Activated CD4-positive, alpha-beta memory T cell treated with anti-CD3 and anti-CD28 coated beads, Interleukin-2, amount 10 ng/mL, durations not matched to agents 7 days and 5 days (primary cell): ENCODE measurements at regions of chr13 and their contacts with region 1.

Region 1: DNA sequence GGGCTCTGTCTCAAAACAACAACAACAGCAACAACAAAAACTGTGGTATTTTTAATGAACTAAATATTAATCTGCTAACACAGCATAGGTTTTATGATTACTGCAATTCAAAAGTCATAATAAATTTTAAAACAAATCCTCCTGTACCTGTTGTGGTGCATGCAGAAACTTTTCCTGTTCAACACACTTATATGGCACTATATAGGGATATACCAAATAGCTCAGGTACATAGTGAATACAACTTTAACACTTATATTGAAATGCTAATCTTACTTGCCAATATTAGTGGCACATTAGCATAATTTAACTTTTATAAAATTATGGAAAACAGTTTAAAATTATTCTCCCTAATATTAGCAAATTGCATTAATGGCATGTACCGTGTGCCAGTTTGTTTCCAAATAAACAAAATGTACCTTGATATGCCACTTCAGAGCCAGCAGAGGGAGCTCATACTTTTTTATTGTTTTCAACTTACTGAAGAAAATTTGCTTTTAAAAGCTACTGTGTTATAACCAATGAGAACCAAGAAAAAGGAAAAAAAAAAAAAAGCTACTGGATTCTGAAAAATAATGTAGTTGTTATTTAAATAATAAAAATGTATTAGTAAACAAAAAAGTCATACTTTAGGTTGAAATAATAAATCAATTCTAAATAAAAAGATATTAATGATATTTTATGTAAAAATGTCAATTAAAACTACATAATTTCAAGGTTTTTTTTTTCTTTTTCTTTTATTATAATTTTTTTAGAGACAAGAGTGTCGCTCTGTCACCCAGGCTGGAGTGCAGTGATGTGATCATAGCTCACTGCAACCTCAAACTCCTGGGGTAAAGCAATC is 18.0 kb upstream of the RBM26 start:
- DNase-seq: no peak
- H3K4me3 Mint-ChIP-seq: no peak overlapping the region
- H3K27ac Mint-ChIP-seq: no peak overlapping the region
- H3K4me1 Mint-ChIP-seq: peaks cover 8% of the 10 kb centered on the region
- H3K27me3 Mint-ChIP-seq: no peaks in the 10 kb centered on the region

Region 2: GRCh38 chr13:79405829-79406596 is 18.0 kb before region 1 on chr13 and contains the start of gene RBM26:
- CTCF ChIA-PET with region 1: interaction called, 19 read pairs
- POLR2A ChIA-PET with region 1: interaction called, 11 read pairs
- DNase-seq: peak; percentile 94
- H3K4me3 Mint-ChIP-seq: peak within 1 kb of the TSS; percentile 89
- H3K27ac Mint-ChIP-seq: peak within 1 kb of the TSS; percentile 93
- H3K4me1 Mint-ChIP-seq: peaks cover 13% of the 10 kb centered on the region
- H3K27me3 Mint-ChIP-seq: no peaks in the 10 kb centered on the region
- total RNA-seq, gene RBM26: 51.1 to 52.0 TPM

Region 3: DNA sequence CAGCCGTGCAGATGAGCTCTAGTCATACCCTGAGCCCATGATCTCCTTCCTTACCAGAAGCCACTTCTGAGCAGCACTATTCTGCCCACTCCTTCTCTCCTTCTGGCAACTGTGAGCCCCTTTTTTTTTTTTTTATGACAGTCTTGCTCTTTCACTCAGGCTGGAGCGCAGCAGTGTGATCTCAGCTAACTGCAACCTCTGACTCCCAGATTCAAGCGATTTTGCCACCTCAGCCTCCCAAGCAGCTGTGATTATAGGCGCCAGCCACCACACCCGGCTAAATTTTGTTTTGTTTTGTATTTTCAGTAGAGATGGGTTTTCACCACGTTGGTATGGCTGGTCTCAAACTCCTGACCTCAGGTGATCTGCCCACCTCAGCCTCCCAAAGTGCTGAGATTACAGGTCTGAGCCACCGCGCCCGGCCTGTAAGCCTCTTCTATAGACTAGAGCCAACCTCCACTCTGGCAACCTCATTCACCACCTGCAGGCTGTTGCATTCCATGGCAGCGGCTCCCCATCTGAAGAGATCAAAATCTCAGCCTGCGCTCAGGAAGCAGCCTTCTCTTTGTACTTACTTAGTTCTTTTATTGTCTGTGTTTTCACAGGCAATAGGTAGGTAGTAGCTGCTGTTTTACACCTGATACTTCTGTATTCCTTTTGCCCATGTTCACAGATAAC is 22.1 kb after region 1 on chr13:
- CTCF ChIA-PET with region 1: interaction called, 11 read pairs
- POLR2A ChIA-PET with region 1: interaction called, 4 read pairs
- DNase-seq: no peak
- H3K4me3 Mint-ChIP-seq: no peak overlapping the region
- H3K27ac Mint-ChIP-seq: no peak overlapping the region
- H3K4me1 Mint-ChIP-seq: peaks cover 50% of the 10 kb centered on the region
- H3K27me3 Mint-ChIP-seq: no peaks in the 10 kb centered on the region

Region 4: GRCh38 chr13:79457948-79458347 is 33.9 kb after region 1 on chr13:
- CTCF ChIA-PET with region 1: interaction called, 13 read pairs
- POLR2A ChIA-PET with region 1: interaction called, 4 read pairs
- DNase-seq: peak; percentile 31
- H3K4me3 Mint-ChIP-seq: no peak overlapping the region
- H3K27ac Mint-ChIP-seq: no peak overlapping the region
- H3K4me1 Mint-ChIP-seq: peaks cover 47% of the 10 kb centered on the region
- H3K27me3 Mint-ChIP-seq: no peaks in the 10 kb centered on the region

Region 5: GRCh38 chr13:79516595-79516994 is 92.6 kb after region 1 on chr13:
- CTCF ChIA-PET with region 1: interaction called, 14 read pairs
- POLR2A ChIA-PET with region 1: no interaction called
- DNase-seq: no peak
- H3K4me3 Mint-ChIP-seq: no peak overlapping the region
- H3K27ac Mint-ChIP-seq: no peak overlapping the region
- H3K4me1 Mint-ChIP-seq: peaks cover 41% of the 10 kb centered on the region
- H3K27me3 Mint-ChIP-seq: no peaks in the 10 kb centered on the region

Region 6: GRCh38 chr13:79528759-79529191 is 104.8 kb after region 1 on chr13:
- CTCF ChIA-PET with region 1: interaction called, 27 read pairs
- POLR2A ChIA-PET with region 1: no interaction called
- DNase-seq: no peak
- H3K4me3 Mint-ChIP-seq: no peak overlapping the region
- H3K27ac Mint-ChIP-seq: no peak overlapping the region
- H3K4me1 Mint-ChIP-seq: peaks cover 24% of the 10 kb centered on the region
- H3K27me3 Mint-ChIP-seq: no peaks in the 10 kb centered on the region

Region 7: DNA sequence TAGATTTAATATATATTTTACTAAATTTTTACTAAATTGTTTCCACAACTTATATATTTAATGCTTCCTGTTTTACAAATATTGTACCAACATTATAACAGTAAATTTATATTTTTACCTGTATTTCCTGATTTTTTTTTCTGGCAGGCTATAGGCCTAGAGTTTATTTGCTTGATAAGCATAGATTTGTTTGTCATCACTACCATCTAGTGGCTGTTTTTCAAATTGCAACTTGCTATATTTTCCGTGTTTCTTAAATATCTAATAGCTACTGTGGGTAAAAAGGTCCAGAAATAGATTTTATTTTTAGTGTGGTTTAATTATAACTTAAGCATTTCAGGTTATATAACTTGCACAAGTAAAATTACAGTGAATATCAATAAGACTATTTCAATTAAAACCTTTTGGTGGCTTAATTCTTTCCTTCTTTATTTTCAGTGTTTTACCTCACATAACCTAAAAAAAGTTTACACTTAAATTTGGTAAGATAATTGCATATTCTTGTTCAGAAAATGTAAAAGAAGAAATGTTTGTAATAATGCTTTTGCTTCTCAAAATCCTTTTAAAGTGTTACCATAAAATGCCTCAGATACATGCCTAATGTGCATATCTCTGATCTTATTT is 117.5 kb after region 1 on chr13:
- CTCF ChIA-PET with region 1: interaction called, 181 read pairs
- POLR2A ChIA-PET with region 1: interaction called, 17 read pairs
- DNase-seq: no peak
- H3K4me3 Mint-ChIP-seq: no peak overlapping the region
- H3K27ac Mint-ChIP-seq: no peak overlapping the region
- H3K4me1 Mint-ChIP-seq: peaks cover 3% of the 10 kb centered on the region
- H3K27me3 Mint-ChIP-seq: no peaks in the 10 kb centered on the region